ENCODE measurements at regions of chr20 and their contacts with region 1.

Region 1: DNA sequence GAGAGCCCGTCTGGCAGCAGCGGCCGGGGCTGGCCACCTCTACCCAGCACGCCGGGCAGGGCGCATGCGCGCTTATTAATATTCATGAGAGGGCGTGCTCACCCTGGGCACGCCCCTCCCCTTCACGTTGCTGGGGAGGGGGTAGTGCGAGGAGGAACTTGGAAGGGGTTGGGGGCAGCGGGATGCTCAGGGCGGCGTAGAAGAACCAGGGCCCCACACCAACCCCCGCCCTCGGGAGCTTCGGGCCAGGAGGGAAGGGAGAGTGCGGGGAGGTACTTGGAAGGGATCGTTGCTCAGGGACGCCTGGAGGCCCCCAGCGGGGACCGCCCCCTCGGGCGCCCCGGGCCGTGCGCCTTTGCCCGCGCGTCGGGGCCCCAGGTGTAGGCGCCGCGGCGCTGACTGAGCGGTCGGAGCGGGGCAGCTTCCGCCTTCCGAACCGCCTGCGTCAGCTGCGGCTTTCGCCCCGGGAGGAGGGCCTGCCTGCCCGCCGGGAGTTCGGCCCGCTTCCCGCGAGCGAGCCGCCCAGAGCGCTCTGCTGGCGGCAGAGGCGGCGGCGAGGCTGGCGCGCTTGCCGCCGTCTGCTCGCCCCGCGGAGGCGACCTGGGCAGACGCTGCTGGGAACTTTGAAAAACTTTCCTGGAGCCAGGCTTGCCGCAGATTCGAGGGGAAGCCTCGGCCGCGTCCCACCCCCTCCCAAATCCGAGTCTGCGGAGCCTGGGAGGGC is at the start of gene JAG1:
- DNase-seq: peak; percentile 86
- ATAC-seq: peak; percentile 78
- H3K4me3 Mint-ChIP-seq: peak within 1 kb of the TSS; percentile 71
- H3K27ac Mint-ChIP-seq: no peak within 1 kb of the TSS
- H3K4me1 Mint-ChIP-seq: peaks cover 21% of the 10 kb centered on the region
- H3K27me3 Mint-ChIP-seq: peaks cover 61% of the 10 kb centered on the region
- total RNA-seq, gene JAG1: 0.30 to 0.44 TPM

Region 2: DNA sequence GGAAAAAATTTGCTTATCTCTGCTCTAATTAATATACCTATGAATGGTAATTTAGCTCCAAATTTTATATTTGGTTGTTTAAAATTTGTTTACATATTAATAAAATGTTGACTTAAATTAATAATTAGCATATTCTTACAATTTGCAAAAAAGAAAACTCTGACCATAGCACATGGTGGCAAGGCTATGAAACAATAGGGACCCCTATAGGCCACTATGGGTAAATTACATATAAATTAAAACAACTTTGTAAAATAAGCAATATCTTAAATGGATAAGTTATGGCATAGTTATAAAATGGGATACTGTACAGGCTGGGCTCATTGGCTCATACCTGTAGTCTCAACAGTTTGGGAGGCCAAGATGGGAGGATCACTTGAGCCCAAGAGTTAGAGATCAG is 316.2 kb before region 1 on chr20:
- CTCF ChIA-PET with region 1: no interaction called
- POLR2A ChIA-PET with region 1: no interaction called
- intact Hi-C with region 1: loop called in 1 of 2 experiments (anchors 5 kb)
- DNase-seq: no peak
- ATAC-seq: no peak
- H3K4me3 Mint-ChIP-seq: no peak overlapping the region
- H3K27ac Mint-ChIP-seq: no peak overlapping the region
- H3K4me1 Mint-ChIP-seq: peaks cover 4% of the 10 kb centered on the region
- H3K27me3 Mint-ChIP-seq: no peaks in the 10 kb centered on the region

Region 3: DNA sequence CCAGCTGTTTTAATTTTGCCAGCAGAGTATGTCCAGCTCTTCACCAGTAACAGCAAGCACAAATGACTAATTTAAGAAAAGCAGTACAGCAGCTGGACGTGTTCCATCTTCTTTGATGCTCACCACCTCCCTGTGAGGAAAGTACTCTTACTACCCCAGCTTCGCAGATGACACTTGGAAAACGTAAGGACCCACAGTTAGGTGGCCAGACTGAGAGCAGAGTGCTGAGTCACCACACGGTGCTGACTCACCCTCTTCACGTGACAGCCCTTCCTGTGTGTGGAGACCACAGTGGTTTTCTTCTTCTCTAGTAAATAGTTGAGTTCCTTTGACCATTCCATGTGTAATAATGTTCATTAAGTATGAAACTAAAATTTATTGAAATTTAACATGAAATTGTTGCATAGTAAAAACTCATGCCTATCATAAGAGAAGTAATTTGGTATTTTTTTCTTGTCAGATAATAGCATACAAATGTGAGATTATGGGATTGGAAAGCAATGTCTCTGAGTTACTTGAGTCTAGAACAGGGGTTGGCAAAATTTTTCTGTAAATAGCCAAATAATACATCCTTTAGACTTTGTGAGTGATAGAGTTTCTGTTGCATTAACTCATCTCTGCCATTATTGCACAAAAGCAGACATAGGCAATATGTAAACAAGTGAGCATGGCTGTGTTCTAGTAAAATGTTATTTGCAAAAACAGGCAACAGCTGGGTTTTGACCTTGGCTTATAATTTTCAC is 162.5 kb before region 1 on chr20:
- CTCF ChIA-PET with region 1: interaction called, 3 read pairs
- POLR2A ChIA-PET with region 1: no interaction called
- intact Hi-C with region 1: loop called in 1 of 2 experiments (anchors 5 kb)
- DNase-seq: peak; percentile 80
- ATAC-seq: peak; percentile 97
- H3K4me3 Mint-ChIP-seq: no peak overlapping the region
- H3K27ac Mint-ChIP-seq: peak overlapping the region; percentile 63
- H3K4me1 Mint-ChIP-seq: peaks cover 27% of the 10 kb centered on the region
- H3K27me3 Mint-ChIP-seq: no peaks in the 10 kb centered on the region

Region 4: GRCh38 chr20:10558635-10559187 is 115.4 kb before region 1 on chr20:
- CTCF ChIA-PET with region 1: no interaction called
- POLR2A ChIA-PET with region 1: no interaction called
- intact Hi-C with region 1: loop called (anchors 2 to 5 kb)
- DNase-seq: peak; percentile 75
- ATAC-seq: peak; percentile 99
- H3K4me3 Mint-ChIP-seq: no peak overlapping the region
- H3K27ac Mint-ChIP-seq: no peak overlapping the region
- H3K4me1 Mint-ChIP-seq: peaks cover 22% of the 10 kb centered on the region
- H3K27me3 Mint-ChIP-seq: no peaks in the 10 kb centered on the region

Region 5: DNA sequence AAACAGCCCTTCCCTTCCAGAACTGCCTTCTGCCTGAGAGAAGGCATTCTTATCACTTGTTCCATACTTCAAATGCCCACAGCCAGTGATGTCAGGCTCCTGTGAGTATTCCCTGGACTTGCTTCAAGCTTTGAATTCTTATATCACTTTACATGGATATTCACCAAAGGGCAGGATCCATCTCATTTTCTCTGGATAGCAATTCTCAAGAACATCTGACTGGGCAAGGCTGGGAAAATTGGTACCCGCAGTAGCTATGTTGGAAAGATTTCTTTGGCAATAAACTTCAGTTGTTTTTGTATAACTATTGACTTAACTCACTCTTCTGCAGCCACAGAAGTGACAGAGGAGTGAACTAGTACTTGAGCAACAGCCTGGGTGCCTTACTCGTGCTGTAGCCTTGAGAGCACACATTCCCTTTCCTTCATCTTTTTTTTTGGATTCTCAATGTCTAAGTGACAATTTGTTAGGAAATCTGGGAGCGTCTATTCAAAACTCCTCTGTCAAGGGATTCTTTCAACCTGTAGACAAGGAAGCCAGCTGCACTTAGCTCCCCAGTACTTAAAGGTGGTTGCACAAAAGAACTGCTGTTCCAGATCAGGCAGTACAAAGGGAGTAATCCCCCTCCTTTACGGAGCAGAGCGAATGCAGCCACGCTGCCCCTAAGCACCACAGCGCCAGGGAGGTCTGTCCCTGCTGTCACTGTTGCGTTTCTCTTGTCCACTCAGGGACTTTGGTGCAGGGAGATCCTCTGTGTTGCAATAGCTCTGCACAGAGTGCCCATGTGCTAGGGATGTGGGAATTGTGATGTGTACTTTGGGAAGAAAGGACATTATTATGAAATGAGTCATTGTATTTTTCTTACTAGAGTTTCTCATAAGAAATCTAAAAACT is 69.9 kb before region 1 on chr20:
- CTCF ChIA-PET with region 1: interaction called, 7 read pairs
- POLR2A ChIA-PET with region 1: interaction called, 3 read pairs
- intact Hi-C with region 1: loop called in 1 of 2 experiments (anchors 2 kb)
- DNase-seq: no peak
- ATAC-seq: no peak
- H3K4me3 Mint-ChIP-seq: no peak overlapping the region
- H3K27ac Mint-ChIP-seq: no peak overlapping the region
- H3K4me1 Mint-ChIP-seq: peaks cover 9% of the 10 kb centered on the region
- H3K27me3 Mint-ChIP-seq: no peaks in the 10 kb centered on the region

Region 6: GRCh38 chr20:11890331-11891080 is 1216.4 kb after region 1 on chr20:
- CTCF ChIA-PET with region 1: no interaction called
- POLR2A ChIA-PET with region 1: no interaction called
- intact Hi-C with region 1: loop called in 1 of 2 experiments (anchors 5 kb)
- DNase-seq: peak; percentile 86
- ATAC-seq: peak; percentile 77
- H3K4me3 Mint-ChIP-seq: peak overlapping the region; percentile 76
- H3K27ac Mint-ChIP-seq: peak overlapping the region; percentile 51
- H3K4me1 Mint-ChIP-seq: peaks cover 13% of the 10 kb centered on the region
- H3K27me3 Mint-ChIP-seq: peaks cover 12% of the 10 kb centered on the region